CD4-positive, alpha-beta T cell (primary cell): ENCODE measurements at regions of chr17 and their contacts with region 1.

Region 1: DNA sequence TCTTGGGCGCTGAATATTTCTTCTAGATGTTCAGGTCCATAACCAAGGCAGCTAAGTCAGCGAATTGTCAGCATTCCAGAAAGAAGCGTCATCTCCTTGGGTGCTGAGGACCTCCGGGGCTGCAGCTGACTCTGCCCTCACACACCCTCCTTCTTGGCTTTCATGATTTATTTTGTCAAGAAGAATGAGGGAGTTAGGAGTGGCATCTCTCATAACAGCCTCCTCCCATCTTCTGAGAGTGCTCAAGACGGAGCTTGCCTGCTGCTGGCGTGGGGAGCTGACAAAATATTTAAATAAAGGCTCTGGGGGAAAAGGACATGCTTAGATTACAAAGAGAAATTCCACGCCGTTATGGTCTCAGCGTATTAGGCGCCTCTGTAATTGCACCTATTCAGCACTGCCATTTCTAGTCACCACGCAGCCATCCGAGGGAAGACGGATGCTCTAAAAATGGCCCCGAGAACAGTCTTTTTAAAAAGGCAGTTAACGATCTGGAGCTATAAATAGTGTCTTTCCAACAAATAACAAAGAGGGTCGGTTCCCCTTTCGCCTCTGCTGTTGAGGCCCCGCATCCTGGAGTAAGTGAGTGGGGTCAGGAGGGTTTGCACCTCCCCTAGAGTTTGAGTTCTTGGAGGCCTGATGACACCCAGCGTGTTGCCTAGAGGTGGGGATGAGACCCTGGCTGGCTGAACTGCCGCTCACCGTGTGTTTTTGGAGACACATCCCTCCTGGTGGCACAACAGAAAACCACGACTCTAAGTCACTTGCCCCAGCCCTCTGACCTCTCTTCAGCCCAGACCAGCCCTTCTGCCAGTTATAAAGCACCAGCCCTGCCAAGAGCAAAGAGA is 187.0 kb downstream of the CCDC182 start:
- DNase-seq: no peak
- ATAC-seq: no peak
- H3K4me3 ChIP-seq: no peak overlapping the region
- H3K4me3 Mint-ChIP-seq: no peak overlapping the region
- H3K27ac ChIP-seq: no peak overlapping the region
- H3K27ac Mint-ChIP-seq: no peak overlapping the region
- H3K4me1 ChIP-seq: no peaks in the 10 kb centered on the region
- H3K4me1 Mint-ChIP-seq: peaks cover 14% of the 10 kb centered on the region
- H3K27me3 ChIP-seq: no peaks in the 10 kb centered on the region
- H3K27me3 Mint-ChIP-seq: no peaks in the 10 kb centered on the region
- CTCF ChIP-seq: no peak

Region 2: GRCh38 chr17:56300144-56300543 is 1257.9 kb before region 1 on chr17:
- CTCF ChIA-PET with region 1: no interaction called
- POLR2A ChIA-PET with region 1: no interaction called
- intact Hi-C with region 1: loop called in 1 of 2 experiments (anchors 5 kb)
- DNase-seq: no peak
- ATAC-seq: no peak
- H3K4me3 ChIP-seq: no peak overlapping the region
- H3K4me3 Mint-ChIP-seq: no peak overlapping the region
- H3K27ac ChIP-seq: no peak overlapping the region
- H3K27ac Mint-ChIP-seq: no peak overlapping the region
- H3K4me1 ChIP-seq: peaks cover 6% of the 10 kb centered on the region
- H3K4me1 Mint-ChIP-seq: peaks cover 10% of the 10 kb centered on the region
- H3K27me3 ChIP-seq: peaks cover 0 to 2% of the 10 kb centered on the region in 2 experiments
- H3K27me3 Mint-ChIP-seq: no peaks in the 10 kb centered on the region
- CTCF ChIP-seq: no peak